ENCODE measurements at regions of chr9 and their contacts with region 1.

Region 1: DNA sequence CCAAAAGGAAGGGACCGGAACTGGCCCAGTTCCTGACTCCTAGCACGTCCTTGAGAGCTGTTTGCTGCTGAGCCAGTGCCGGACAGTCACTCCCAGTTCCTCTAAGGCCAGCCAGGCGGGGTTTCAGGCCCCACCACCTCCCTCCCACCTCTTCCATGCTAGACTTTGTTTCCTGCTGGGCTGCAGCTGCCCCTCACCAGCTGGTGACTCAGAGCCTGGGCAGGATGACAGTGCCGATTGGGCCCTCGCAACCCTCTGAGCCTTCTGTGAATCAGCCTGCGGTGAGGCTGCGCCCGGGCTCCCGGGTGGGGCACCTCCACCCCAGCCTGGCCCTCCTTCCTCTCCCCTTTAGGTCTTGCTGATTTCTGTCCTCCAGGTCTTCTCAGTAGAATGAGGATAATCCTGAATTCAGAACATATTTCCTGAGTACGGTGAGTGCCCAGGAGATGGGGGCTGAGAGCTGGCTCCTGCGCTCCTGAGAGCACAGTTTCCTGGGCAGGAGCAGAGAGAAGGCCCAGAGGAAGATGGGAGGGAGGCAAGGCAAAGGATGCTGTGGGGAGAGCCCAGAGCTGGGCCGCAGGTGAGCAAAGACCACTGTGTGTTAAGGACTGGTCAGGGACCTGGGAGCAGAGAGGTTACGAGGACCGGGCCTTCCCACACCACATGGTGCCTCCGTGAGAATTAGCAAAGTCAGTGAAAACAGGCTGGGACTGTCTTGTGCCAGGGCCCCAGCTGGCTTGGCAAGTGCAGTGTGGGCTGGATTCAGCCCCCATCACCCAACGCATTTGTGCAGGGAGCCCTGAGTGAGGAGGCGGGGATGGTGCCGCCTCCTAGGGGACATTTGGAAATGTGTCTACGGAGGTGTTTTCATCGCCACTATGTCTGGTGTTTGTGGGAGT is 32.9 kb upstream of the STXBP1 start:
- DNase-seq: peak; percentile 86
- ATAC-seq: peak; percentile 91
- H3K4me3 ChIP-seq: peak overlapping the region; percentile 56 to 79 (median 62)
- H3K27ac ChIP-seq: peak overlapping the region; percentile 62
- H3K4me1 ChIP-seq: peaks cover 73% of the 10 kb centered on the region
- H3K27me3 ChIP-seq: no peaks in the 10 kb centered on the region
- CTCF ChIP-seq: peak; percentile 71
- EP300 ChIP-seq: peak in 1 of 2 experiments; percentile 49; a peak in 2 of 4 replicates
- POLR2A ChIP-seq: peak in 1 of 2 experiments; percentile 58; a peak in 2 of 4 replicates
- RAD21 ChIP-seq: peak; percentile 57

Region 2: GRCh38 chr9:127450830-127451724 is 128.1 kb before region 1 on chr9 and contains the starts of genes LRSAM1 and RPL12:
- CTCF ChIA-PET with region 1: no interaction called
- POLR2A ChIA-PET with region 1: interaction called, 14 read pairs
- in situ Hi-C with region 1: no loop called
- intact Hi-C with region 1: no loop called
- DNase-seq: peak; percentile 86
- ATAC-seq: peak; percentile 66
- H3K4me3 ChIP-seq: peak within 1 kb of the TSS; percentile 85 to 97 (median 93)
- H3K27ac ChIP-seq: peak within 1 kb of the TSS; percentile 83
- H3K4me1 ChIP-seq: peaks cover 36% of the 10 kb centered on the region
- H3K27me3 ChIP-seq: no peaks in the 10 kb centered on the region; a peak in 1 of 5 replicates
- CTCF ChIP-seq: no peak
- EP300 ChIP-seq: 0 out of 4 replicates have a peak, but pooled peaks have one; percentile 20 to 25
- POLR2A ChIP-seq: peak; percentile 99 to 100
- RAD21 ChIP-seq: peak; percentile 41
- total RNA-seq, gene LRSAM1: 4.6 and 8.7 TPM in 2 replicates
- total RNA-seq, gene RPL12: 1,551 and 1,660 TPM in 2 replicates

Region 3: DNA sequence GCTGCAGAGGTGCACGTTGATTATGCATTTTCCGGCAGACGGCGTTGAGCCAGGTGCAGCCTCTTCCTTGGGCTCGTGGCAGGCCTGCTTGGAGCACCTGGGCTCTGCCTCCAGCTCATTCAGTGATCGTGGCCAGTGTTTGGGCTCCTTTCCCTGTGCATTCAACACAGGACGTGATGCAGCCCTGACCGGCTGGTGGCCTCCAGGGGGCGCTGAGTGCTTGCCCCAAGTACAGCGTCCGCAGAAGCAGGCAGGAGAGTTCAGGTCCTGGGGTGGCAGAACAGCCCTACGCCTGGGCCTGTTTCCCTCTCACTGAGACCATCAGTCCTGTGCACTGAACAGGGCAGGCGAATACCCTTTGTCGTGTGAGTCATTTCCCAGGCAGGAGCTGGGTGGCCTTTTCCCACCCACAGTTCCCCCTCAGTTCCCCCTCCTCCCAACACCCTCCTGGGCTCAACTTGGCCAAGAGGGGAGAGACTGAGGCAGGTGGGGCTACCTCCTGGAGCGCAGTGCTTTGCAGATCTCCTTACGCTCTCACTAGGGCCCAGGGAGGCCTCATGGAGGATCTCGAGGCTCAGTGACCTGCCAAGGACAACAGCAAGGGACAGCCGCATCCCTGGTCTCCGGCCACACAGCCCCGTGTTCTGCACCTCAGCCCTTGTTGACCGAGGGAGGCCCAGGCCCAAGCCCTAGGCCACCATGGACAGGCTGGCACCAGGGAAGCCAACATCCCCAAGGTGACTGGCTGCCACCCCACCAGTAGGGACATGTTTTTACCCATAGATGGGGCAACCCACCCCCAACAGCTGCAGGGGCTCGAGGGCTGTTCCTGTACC is 75.0 kb before region 1 on chr9:
- CTCF ChIA-PET with region 1: interaction called, 48 read pairs
- POLR2A ChIA-PET with region 1: interaction called, 3 read pairs
- in situ Hi-C with region 1: no loop called
- intact Hi-C with region 1: loop called (anchors 2 kb)
- DNase-seq: peak; percentile 70
- ATAC-seq: peak; percentile 84
- H3K4me3 ChIP-seq: no peak overlapping the region
- H3K27ac ChIP-seq: no peak overlapping the region
- H3K4me1 ChIP-seq: no peaks in the 10 kb centered on the region
- H3K27me3 ChIP-seq: no peaks in the 10 kb centered on the region
- CTCF ChIP-seq: peak; percentile 97
- EP300 ChIP-seq: no peak
- POLR2A ChIP-seq: no peak
- RAD21 ChIP-seq: peak; percentile 95

Region 4: DNA sequence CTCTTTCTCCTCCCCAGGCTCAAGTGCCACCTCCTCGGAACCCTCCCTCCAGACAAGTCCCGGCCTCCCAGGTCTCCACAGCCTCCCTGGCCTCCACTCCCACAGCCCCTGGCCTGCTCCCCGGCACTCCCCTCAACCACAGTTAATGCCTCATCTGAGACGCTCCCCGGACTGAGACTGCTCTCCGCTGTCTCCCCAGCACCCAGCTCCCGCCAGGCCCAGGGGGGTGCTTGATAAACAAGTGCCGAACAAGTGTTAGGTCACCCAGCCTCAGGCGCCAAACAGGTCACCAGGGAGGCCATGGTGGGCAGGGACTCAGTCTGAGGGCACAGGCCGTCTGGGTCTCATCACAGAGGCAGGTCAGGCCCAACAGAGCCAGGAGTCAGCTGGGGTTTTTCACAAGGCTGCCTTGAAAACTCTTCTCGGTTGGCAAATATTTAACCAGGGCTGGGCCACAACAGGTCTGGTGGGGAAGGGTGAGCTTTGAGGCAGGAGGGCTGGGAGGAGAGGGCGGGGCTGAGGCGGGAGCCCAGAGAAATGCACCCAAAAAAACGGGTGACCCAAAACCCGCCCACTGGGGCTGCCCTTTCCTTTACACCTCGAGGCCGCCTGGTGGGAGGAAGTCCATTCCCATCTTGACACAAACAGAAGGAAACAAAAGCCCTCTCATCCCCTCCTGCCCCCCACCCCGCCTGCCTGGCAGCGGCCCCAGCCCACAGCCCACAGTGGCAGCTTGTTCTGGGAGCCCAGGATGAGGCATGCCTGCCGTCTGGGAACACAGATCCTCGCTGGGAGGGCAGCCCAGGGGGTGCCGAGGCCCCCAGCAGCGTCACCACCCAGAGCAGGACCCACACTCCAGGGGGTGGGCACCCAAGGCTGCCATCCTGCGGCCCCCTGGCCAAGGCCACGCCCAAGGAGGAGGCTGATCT is 33.7 kb before region 1 on chr9:
- CTCF ChIA-PET with region 1: no interaction called
- POLR2A ChIA-PET with region 1: interaction called, 23 read pairs
- in situ Hi-C with region 1: no loop called
- intact Hi-C with region 1: loop called (anchors 1 kb)
- DNase-seq: peak; percentile 96
- ATAC-seq: peak; percentile 92
- H3K4me3 ChIP-seq: peak overlapping the region; percentile 39 to 64 (median 46); a peak in 5 of 6 replicates
- H3K27ac ChIP-seq: peak overlapping the region; percentile 78
- H3K4me1 ChIP-seq: peaks cover 58% of the 10 kb centered on the region
- H3K27me3 ChIP-seq: no peaks in the 10 kb centered on the region
- CTCF ChIP-seq: no peak
- EP300 ChIP-seq: 0 out of 4 replicates have a peak, but pooled peaks of 1 of the 2 experiments have one; percentile 10
- POLR2A ChIP-seq: peak; percentile 51 to 59; a peak in 2 of 4 replicates
- RAD21 ChIP-seq: no peak; the same call in 1 of the 2 replicates

Region 5: GRCh38 chr9:127916665-127917613 is 337.7 kb after region 1 on chr9 and contains the start of gene ST6GALNAC4:
- CTCF ChIA-PET with region 1: no interaction called
- POLR2A ChIA-PET with region 1: no interaction called
- in situ Hi-C with region 1: no loop called
- intact Hi-C with region 1: no loop called
- DNase-seq: peak; percentile 70
- ATAC-seq: peak; percentile 70
- H3K4me3 ChIP-seq: peak within 1 kb of the TSS; percentile 71 to 91 (median 73)
- H3K27ac ChIP-seq: peak within 1 kb of the TSS; percentile 40
- H3K4me1 ChIP-seq: peaks cover 78% of the 10 kb centered on the region
- H3K27me3 ChIP-seq: no peaks in the 10 kb centered on the region
- CTCF ChIP-seq: no peak
- EP300 ChIP-seq: no peak
- POLR2A ChIP-seq: no peak
- RAD21 ChIP-seq: no peak
- total RNA-seq, gene ST6GALNAC4: 14.8 and 18.8 TPM in 2 replicates